ENCODE measurements at regions of chr1 and their contacts with region 1.

Region 1: GRCh38 chr1:172398970-172399755 is 21.3 kb upstream of the C1orf105 start:
- H3K4me3 Mint-ChIP-seq: no peak overlapping the region
- H3K27ac Mint-ChIP-seq: no peak overlapping the region
- H3K4me1 Mint-ChIP-seq: peaks cover 15% of the 10 kb centered on the region
- H3K27me3 Mint-ChIP-seq: no peaks in the 10 kb centered on the region

Region 2: GRCh38 chr1:171801487-171801891 is 597.7 kb before region 1 on chr1:
- intact Hi-C with region 1: loop called (anchors 10 kb)
- H3K4me3 Mint-ChIP-seq: no peak overlapping the region
- H3K27ac Mint-ChIP-seq: no peak overlapping the region
- H3K4me1 Mint-ChIP-seq: peaks cover 21% of the 10 kb centered on the region
- H3K27me3 Mint-ChIP-seq: no peaks in the 10 kb centered on the region

Region 3: DNA sequence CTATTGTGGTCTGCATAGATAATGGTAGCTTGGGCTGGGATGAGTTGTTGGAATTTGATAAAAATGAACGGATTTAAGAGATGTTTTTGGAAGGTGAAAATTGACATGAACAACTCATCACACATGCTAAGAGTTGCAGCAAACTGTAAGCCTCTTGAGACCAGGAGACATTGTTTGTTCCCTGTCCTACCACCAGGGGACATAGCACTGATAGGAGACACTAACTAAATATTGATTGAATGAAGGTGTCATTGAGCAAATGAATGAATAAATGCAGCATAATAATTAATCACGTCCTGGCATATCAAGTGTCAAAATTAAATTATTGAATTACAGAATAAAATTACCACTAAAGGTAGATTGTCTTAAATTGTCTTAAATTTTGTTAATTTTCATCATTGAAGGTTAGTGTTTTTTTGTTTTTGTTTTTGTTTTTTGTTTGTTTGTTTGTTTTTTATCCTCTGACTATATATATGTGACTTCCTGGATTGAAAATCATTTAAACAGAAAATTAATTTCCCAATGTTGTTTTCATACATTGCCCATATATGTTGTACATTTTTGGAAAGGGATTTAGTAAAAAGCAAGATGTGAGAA is 264.0 kb before region 1 on chr1:
- intact Hi-C with region 1: loop called (anchors 2 kb)
- H3K4me3 Mint-ChIP-seq: no peak overlapping the region
- H3K27ac Mint-ChIP-seq: no peak overlapping the region
- H3K4me1 Mint-ChIP-seq: peaks cover 5% of the 10 kb centered on the region
- H3K27me3 Mint-ChIP-seq: no peaks in the 10 kb centered on the region

Region 4: DNA sequence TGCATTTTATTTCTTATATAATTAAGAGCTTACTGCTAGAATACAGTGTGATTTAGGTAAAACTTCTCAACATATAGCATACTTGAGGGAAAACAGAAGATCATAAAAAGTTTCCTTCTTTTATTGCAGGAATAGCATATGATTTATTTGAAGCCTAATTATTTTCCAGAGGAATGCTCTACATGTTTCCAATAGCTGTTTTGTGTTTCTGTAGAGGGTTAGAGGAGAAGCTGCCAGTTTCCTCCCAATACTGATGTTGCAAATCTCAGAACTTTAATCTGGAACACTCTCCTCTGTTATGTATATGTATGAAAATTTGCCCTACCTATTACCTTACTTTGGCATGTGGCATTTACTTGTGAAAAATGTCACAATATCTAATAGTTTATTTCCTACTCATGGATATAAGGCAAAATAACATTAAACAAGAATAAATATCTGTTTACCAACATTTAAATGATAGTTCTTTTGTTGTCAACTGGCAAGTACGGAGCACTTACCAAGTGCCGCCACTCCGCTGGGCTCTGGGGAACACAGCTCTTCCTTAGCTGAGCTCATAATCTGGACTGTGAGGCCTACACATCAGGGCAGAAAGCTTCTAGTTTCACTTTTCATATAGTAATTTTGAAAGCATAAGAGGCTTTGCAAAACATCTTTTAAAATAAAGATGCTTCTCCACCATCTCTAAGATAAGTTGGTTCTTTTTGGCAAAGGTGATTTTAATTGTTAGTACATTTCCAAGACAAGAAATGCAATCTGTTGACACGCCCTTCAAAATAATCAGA is 218.5 kb before region 1 on chr1:
- intact Hi-C with region 1: loop called (anchors 5 kb)
- H3K4me3 Mint-ChIP-seq: no peak overlapping the region
- H3K27ac Mint-ChIP-seq: peak overlapping the region; percentile 78
- H3K4me1 Mint-ChIP-seq: peaks cover 22% of the 10 kb centered on the region
- H3K27me3 Mint-ChIP-seq: no peaks in the 10 kb centered on the region

Region 5: GRCh38 chr1:173224280-173224892 is 825.2 kb after region 1 on chr1:
- intact Hi-C with region 1: no loop called
- H3K4me3 Mint-ChIP-seq: no peak overlapping the region
- H3K27ac Mint-ChIP-seq: peak overlapping the region; percentile 9
- H3K4me1 Mint-ChIP-seq: peaks cover 9% of the 10 kb centered on the region
- H3K27me3 Mint-ChIP-seq: no peaks in the 10 kb centered on the region

Measured in dendritic cell treated with granulocyte-macrophage colony-stimulating factor and Interleukin-4, amounts not matched to agents 40 ng/mL and 50 ng/mL, for 4 days (primary cell).